ENCODE measurements at regions of chr6 and their contacts with region 1.

Region 1: DNA sequence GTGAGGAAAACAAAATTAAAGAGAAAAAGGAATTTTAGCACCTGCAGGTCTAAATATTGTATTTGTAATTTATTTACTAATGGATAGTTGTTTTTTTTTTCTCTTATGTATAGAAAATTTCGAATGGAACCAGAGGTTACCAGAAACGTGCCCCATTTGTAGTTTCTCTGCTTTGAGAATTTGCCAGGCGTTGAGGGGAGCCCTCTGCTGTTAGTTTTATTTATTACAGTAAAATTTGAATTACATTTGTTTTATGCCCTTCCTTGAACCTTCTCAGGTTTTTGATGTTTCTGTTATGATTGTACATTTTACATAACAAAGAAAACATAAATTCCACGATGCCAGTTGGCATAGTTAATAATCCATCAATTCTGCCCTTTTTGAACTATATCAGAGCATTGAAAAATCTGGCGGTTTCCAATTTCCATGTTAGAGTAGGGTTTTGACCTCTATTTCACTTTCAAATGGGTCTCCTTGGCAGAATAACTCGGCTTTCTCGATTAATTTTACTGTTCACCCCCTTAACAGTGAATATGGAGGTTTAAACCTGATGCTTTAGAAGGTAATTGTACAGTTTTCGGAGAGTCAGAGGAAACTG is 35.1 kb upstream of the RFPL4B start:
- DNase-seq: no peak
- H3K4me3 ChIP-seq: no peak overlapping the region
- H3K27ac ChIP-seq: no peak overlapping the region
- H3K4me1 ChIP-seq: no peaks in the 10 kb centered on the region
- H3K27me3 ChIP-seq: no peaks in the 10 kb centered on the region
- CTCF ChIP-seq: peak; percentile 45 to 78 (median 54)

Region 2: GRCh38 chr6:112087136-112087911 is 224.7 kb before region 1 on chr6 and contains the starts of genes FAM229B and TUBE1:
- intact Hi-C with region 1: loop called (anchors 5 kb)
- DNase-seq: peak; percentile 87 to 96
- H3K4me3 ChIP-seq: peak within 1 kb of the TSS; percentile 71 to 91
- H3K27ac ChIP-seq: peak within 1 kb of the TSS; percentile 73 to 76
- H3K4me1 ChIP-seq: peaks cover 0 to 2% of the 10 kb centered on the region in 2 donors
- H3K27me3 ChIP-seq: no peaks in the 10 kb centered on the region
- CTCF ChIP-seq: peak in 1 of 3 experiments; percentile 26
- total RNA-seq, gene FAM229B: 5.5 TPM
- total RNA-seq, gene TUBE1: 6.0 TPM

Region 3: DNA sequence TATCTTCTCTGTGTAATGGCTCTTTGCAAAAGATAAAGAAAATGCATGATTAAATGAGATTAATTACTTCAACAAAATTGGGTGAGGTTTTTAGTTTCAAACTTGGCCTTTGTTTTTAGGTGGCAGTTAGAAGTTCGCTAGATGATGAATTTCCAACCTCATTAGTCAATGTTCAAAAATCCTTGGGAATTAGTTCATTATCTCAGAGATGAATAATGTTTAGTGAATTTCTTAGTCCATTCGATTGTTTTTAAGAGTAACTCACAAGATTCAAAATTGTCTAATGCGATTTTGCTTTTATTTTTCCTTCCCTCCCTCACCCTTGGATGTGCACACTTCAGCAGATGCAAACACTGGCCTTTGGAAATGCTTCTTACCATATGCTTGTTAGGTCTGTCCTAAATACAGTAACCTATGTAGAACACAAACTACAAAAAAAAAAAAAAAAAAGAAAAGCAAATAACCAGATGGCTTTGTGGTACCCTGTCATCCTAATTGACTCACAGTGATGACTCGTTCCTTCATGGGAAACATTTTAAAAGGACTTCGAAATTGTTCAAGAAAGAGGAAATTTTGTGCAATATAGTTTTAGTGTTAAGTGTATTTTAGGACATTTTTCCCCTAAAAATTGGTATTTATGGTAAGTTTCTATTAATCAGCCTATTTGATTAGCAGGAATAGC is 158.0 kb before region 1 on chr6:
- intact Hi-C with region 1: no loop called
- DNase-seq: no peak
- H3K4me3 ChIP-seq: no peak overlapping the region
- H3K27ac ChIP-seq: no peak overlapping the region
- H3K4me1 ChIP-seq: no peaks in the 10 kb centered on the region
- H3K27me3 ChIP-seq: no peaks in the 10 kb centered on the region
- CTCF ChIP-seq: no peak